H1 (cell line): ENCODE measurements at regions of chr1 and their contacts with region 1.

Region 1: GRCh38 chr1:179781962-179782361 is 38.9 kb downstream of the FAM163A start:
- DNase-seq: no peak
- H3K4me3 ChIP-seq: no peak overlapping the region
- H3K27ac ChIP-seq: no peak overlapping the region
- H3K4me1 ChIP-seq: no peaks in the 10 kb centered on the region
- H3K27me3 ChIP-seq: no peaks in the 10 kb centered on the region
- CTCF ChIP-seq: no peak
- EP300 ChIP-seq: no peak
- POLR2A ChIP-seq: no peak
- RAD21 ChIP-seq: no peak

Region 2: DNA sequence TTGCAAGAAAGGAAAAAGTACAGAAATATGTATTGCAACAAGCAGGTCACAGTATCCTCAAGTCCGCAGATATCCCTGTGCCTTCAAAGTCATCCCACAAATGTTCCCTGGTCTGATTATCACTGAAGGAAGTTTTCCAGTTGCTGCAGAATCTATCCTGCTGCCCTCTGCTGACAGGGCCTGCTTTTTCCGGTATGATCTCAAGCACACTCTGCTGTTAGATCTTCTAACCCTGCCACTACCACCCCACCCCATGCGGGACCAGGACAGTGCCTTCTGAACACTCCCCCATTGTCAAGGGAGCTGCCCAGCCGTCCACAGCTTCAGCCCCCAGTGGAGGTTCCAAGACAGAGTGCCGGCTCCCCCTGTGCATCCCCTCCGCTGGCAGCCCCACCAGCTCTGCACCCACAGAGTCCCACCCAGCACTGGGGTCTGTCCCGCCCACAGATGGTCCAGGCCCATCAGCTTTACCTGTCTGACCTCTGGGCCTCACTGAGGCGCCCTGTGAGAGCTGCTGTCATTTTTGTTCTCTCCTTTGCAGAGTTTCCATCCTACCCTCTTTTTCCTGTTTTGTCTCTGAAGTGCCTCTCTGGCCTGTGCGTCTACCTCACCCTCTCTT is 11.0 kb before region 1 on chr1:
- CTCF ChIA-PET with region 1: interaction called, 12 read pairs
- POLR2A ChIA-PET with region 1: interaction called, 4 read pairs
- DNase-seq: no peak
- H3K4me3 ChIP-seq: no peak overlapping the region
- H3K27ac ChIP-seq: no peak overlapping the region
- H3K4me1 ChIP-seq: no peaks in the 10 kb centered on the region; a peak in 1 of 7 replicates
- H3K27me3 ChIP-seq: peaks cover 0 to 3% (median 0%) of the 10 kb centered on the region in 4 experiments; a peak in 1 of 7 replicates
- CTCF ChIP-seq: no peak
- EP300 ChIP-seq: no peak
- POLR2A ChIP-seq: no peak
- RAD21 ChIP-seq: peak; percentile 12 to 16; a peak in 1 of 4 replicates

Region 3: GRCh38 chr1:179888071-179888470 is 106.1 kb after region 1 on chr1:
- CTCF ChIA-PET with region 1: no interaction called
- POLR2A ChIA-PET with region 1: no interaction called
- DNase-seq: no peak
- H3K4me3 ChIP-seq: no peak overlapping the region
- H3K27ac ChIP-seq: no peak overlapping the region
- H3K4me1 ChIP-seq: no peaks in the 10 kb centered on the region
- H3K27me3 ChIP-seq: no peaks in the 10 kb centered on the region
- CTCF ChIP-seq: no peak
- EP300 ChIP-seq: no peak
- POLR2A ChIP-seq: no peak
- RAD21 ChIP-seq: no peak